H1 (cell line): ENCODE measurements at regions of chr3 and their contacts with region 1.

Region 1: GRCh38 chr3:141050576-141051442 is at the start of gene SPSB4:
- DNase-seq: peak; percentile 63 to 90
- H3K4me3 ChIP-seq: peak within 1 kb of the TSS; percentile 64 to 92 (median 84)
- H3K27ac ChIP-seq: peak within 1 kb of the TSS; percentile 42; the same call in 1 of the 2 replicates
- H3K4me1 ChIP-seq: peaks cover 0 to 18% (median 5%) of the 10 kb centered on the region in 4 experiments; a peak in 5 of 7 replicates
- H3K27me3 ChIP-seq: peaks cover 0 to 36% (median 12%) of the 10 kb centered on the region in 4 experiments; a peak in 5 of 7 replicates
- CTCF ChIP-seq: peak; percentile 38 to 69 (median 58)
- EP300 ChIP-seq: no peak
- POLR2A ChIP-seq: no peak; a peak in 1 of 3 replicates
- RAD21 ChIP-seq: peak; percentile 37 to 73; a peak in 3 of 4 replicates
- total RNA-seq, gene SPSB4: 17.2 and 18.1 TPM in 2 replicates

Region 2: GRCh38 chr3:141000027-141000663 is 50.7 kb before region 1 on chr3:
- CTCF ChIA-PET with region 1: interaction called, 30 read pairs
- POLR2A ChIA-PET with region 1: interaction called, 3 read pairs
- DNase-seq: peak; percentile 34 to 76
- H3K4me3 ChIP-seq: no peak overlapping the region
- H3K27ac ChIP-seq: no peak overlapping the region
- H3K4me1 ChIP-seq: no peaks in the 10 kb centered on the region
- H3K27me3 ChIP-seq: no peaks in the 10 kb centered on the region
- CTCF ChIP-seq: peak; percentile 87 to 97 (median 95)
- EP300 ChIP-seq: no peak
- POLR2A ChIP-seq: no peak
- RAD21 ChIP-seq: peak; percentile 99

Region 3: DNA sequence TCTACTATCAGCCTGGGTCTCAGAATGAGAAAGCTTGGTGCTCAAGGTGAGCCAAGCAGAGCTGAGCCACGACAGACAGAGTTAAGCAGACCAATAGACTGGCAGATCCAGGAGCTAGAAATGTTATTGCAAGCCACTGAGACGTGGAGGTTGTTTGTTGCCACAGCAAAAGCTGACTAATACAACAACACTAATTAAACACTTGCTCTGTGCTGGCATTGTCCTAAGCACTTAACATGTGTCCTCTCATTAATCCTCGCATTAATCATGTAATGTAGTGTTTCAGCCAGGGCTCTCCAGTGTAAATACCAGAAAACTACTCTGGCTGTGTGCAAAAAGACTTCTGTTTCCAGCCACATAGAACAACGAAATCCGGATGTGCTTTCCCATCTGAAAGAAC is 11.2 kb before region 1 on chr3:
- CTCF ChIA-PET with region 1: interaction called, 62 read pairs
- POLR2A ChIA-PET with region 1: interaction called, 3 read pairs
- DNase-seq: no peak
- H3K4me3 ChIP-seq: no peak overlapping the region
- H3K27ac ChIP-seq: no peak overlapping the region
- H3K4me1 ChIP-seq: no peaks in the 10 kb centered on the region; a peak in 1 of 7 replicates
- H3K27me3 ChIP-seq: no peaks in the 10 kb centered on the region
- CTCF ChIP-seq: no peak
- EP300 ChIP-seq: no peak
- POLR2A ChIP-seq: no peak
- RAD21 ChIP-seq: no peak

Region 4: DNA sequence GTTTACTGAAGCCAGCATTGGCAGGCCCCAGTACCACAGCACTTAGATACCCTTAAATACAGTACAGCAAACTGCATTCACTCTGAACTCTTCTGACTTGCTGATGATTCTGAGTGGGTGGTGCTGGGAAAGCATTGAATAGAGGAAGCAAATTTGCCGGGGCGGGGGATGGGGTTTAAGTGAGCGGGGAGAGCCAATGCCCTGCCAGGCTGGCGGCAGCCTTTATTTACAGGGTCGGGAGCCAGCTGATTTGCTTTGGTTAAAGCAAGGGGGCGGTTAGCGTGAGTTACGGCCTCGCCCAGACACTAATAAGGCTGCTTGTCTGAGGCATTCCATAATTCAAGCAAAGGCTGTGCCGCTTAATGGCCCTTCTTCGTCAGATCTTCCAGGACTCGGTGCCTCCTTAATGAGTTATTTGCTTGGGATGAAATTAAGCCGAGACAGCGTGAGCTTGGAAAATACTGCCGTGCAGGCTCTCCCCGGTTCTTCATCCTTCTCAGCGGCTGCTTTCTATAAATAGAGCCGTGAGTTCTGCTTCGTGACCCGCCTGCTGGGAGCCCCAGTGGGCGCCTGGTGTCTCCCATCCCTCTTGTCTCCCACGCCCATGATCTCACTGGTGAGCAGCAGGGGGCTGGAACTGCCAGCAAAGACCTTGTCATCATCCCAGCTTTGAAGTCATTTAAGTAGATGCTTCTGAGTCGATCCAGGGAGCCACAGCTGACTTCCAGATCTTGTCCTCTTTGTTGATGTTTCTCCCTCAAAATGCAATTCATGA is 26.2 kb after region 1 on chr3:
- CTCF ChIA-PET with region 1: interaction called, 333 read pairs
- POLR2A ChIA-PET with region 1: interaction called, 15 read pairs
- DNase-seq: no peak
- H3K4me3 ChIP-seq: no peak overlapping the region
- H3K27ac ChIP-seq: no peak overlapping the region
- H3K4me1 ChIP-seq: peaks cover 47 to 67% (median 57%) of the 10 kb centered on the region in 4 experiments
- H3K27me3 ChIP-seq: peaks cover 0 to 6% (median 0%) of the 10 kb centered on the region in 4 experiments; a peak in 4 of 7 replicates
- CTCF ChIP-seq: no peak
- EP300 ChIP-seq: no peak
- POLR2A ChIP-seq: no peak
- RAD21 ChIP-seq: no peak

Region 5: GRCh38 chr3:141105828-141106628 is 55.2 kb after region 1 on chr3:
- CTCF ChIA-PET with region 1: interaction called, 168 read pairs
- POLR2A ChIA-PET with region 1: interaction called, 5 read pairs
- DNase-seq: peak in 1 of 2 experiments; percentile 70
- H3K4me3 ChIP-seq: no peak overlapping the region
- H3K27ac ChIP-seq: no peak overlapping the region
- H3K4me1 ChIP-seq: peaks cover 0 to 5% (median 4%) of the 10 kb centered on the region in 4 experiments; a peak in 5 of 7 replicates
- H3K27me3 ChIP-seq: no peaks in the 10 kb centered on the region
- CTCF ChIP-seq: peak in 2 of 3 experiments; percentile 76 to 83; a peak in 3 of 4 replicates
- EP300 ChIP-seq: no peak
- POLR2A ChIP-seq: no peak
- RAD21 ChIP-seq: peak; percentile 73 to 82

Region 6: GRCh38 chr3:141151439-141151838 is 100.6 kb after region 1 on chr3:
- CTCF ChIA-PET with region 1: interaction called, 21 read pairs
- POLR2A ChIA-PET with region 1: no interaction called
- DNase-seq: no peak
- H3K4me3 ChIP-seq: no peak overlapping the region
- H3K27ac ChIP-seq: no peak overlapping the region
- H3K4me1 ChIP-seq: peaks cover 2 to 5% (median 3%) of the 10 kb centered on the region in 4 experiments; a peak in 6 of 7 replicates
- H3K27me3 ChIP-seq: no peaks in the 10 kb centered on the region
- CTCF ChIP-seq: no peak
- EP300 ChIP-seq: no peak
- POLR2A ChIP-seq: no peak
- RAD21 ChIP-seq: no peak

Region 7: GRCh38 chr3:141192345-141192744 is 141.5 kb after region 1 on chr3:
- CTCF ChIA-PET with region 1: interaction called, 51 read pairs
- POLR2A ChIA-PET with region 1: no interaction called
- DNase-seq: peak; percentile 88 to 100
- H3K4me3 ChIP-seq: no peak overlapping the region
- H3K27ac ChIP-seq: no peak overlapping the region
- H3K4me1 ChIP-seq: no peaks in the 10 kb centered on the region
- H3K27me3 ChIP-seq: no peaks in the 10 kb centered on the region
- CTCF ChIP-seq: peak; percentile 89 to 99 (median 99)
- EP300 ChIP-seq: no peak
- POLR2A ChIP-seq: no peak
- RAD21 ChIP-seq: peak; percentile 100